ENCODE measurements at regions of chr7 and their contacts with region 1.

Region 1: GRCh38 chr7:139767561-139767982 is 10.2 kb downstream of the HIPK2 start:
- DNase-seq: peak; percentile 30
- H3K4me3 Mint-ChIP-seq: peak overlapping the region; percentile 50
- H3K27ac Mint-ChIP-seq: peak overlapping the region; percentile 99
- H3K4me1 Mint-ChIP-seq: peaks cover 68% of the 10 kb centered on the region
- H3K27me3 Mint-ChIP-seq: no peaks in the 10 kb centered on the region

Region 2: GRCh38 chr7:139680676-139681462 is 86.7 kb before region 1 on chr7:
- CTCF ChIA-PET with region 1: no interaction called
- POLR2A ChIA-PET with region 1: interaction called, 11 read pairs
- DNase-seq: peak; percentile 87
- H3K4me3 Mint-ChIP-seq: peak overlapping the region; percentile 31
- H3K27ac Mint-ChIP-seq: peak overlapping the region; percentile 88
- H3K4me1 Mint-ChIP-seq: peaks cover 59% of the 10 kb centered on the region
- H3K27me3 Mint-ChIP-seq: no peaks in the 10 kb centered on the region

Region 3: GRCh38 chr7:139777948-139778841 is 10.6 kb after region 1 on chr7 and contains the start of gene HIPK2:
- CTCF ChIA-PET with region 1: interaction called, 4 read pairs
- POLR2A ChIA-PET with region 1: interaction called, 20 read pairs
- DNase-seq: peak; percentile 72
- H3K4me3 Mint-ChIP-seq: peak within 1 kb of the TSS; percentile 98
- H3K27ac Mint-ChIP-seq: peak within 1 kb of the TSS; percentile 96
- H3K4me1 Mint-ChIP-seq: peaks cover 38% of the 10 kb centered on the region
- H3K27me3 Mint-ChIP-seq: peaks cover 23% of the 10 kb centered on the region
- total RNA-seq, gene HIPK2: 24.0 to 25.2 TPM

Measured in activated CD4-positive, alpha-beta memory T cell treated with anti-CD3 and anti-CD28 coated beads, Interleukin-2, amount 10 ng/mL, durations not matched to agents 7 days and 5 days (primary cell).